ENCODE measurements at regions of chr12 and their contacts with region 1.

Region 1: DNA sequence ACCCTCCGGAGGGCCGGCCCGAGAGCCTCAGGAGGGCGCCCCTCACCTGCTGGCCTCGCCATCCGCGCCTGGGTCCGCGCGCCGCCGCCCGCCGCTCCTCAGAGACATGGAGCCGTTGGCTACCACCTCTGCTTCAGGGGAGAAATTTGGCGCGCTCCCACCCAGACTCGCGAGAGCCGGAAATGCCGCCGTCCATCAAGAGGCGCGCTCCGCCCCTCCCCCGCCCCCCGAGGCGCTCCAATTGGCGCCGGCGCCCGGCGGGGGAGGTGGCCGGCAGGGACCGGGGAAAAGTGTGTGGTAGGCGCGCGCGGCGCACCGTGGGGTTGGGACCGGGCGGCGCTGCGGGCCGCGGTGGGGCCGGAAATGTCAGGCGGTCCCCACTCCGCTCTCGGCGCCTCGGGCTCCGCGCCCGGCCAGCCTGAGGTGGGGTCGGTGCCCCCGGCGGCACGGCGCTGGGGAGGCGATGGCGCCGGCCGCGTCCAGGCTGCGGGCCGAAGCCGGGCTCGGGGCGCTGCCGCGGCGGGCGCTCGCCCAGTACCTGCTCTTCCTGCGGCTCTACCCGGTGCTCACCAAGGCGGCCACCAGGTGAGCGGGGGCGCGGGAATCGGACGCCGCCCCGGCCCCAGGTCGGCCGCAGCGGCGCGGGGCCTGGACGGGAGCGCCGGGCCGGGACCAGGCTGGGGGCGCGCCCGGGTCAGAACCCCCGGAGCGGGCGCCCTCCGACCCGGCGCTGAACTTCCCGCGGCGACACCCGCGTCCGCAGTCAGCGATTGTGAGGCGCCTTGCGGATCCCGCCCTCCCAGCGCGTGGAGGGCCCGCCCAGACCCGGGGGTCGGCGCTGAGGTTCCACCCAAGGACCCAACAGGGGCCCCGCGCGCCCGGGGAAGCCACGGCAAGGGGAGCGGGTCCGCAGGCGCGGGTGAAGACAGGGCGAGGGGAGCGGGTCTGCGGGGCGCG is at the starts of genes POLE and PXMP2:
- DNase-seq: peak; percentile 98
- H3K4me3 Mint-ChIP-seq: peak within 1 kb of the TSS; percentile 85
- H3K27ac Mint-ChIP-seq: peak within 1 kb of the TSS; percentile 88
- H3K4me1 Mint-ChIP-seq: peaks cover 27% of the 10 kb centered on the region
- H3K27me3 Mint-ChIP-seq: no peaks in the 10 kb centered on the region
- total RNA-seq, gene POLE: 171 and 180 TPM in 2 replicates
- total RNA-seq, gene PXMP2: 24.4 and 24.6 TPM in 2 replicates

Region 2: GRCh38 chr12:132710422-132711168 is 23.1 kb after region 1 on chr12 and contains the start of gene PGAM5:
- intact Hi-C with region 1: loop called (anchors 1 kb)
- DNase-seq: peak; percentile 98
- H3K4me3 Mint-ChIP-seq: peak within 1 kb of the TSS; percentile 86
- H3K27ac Mint-ChIP-seq: peak within 1 kb of the TSS; percentile 80
- H3K4me1 Mint-ChIP-seq: peaks cover 18% of the 10 kb centered on the region
- H3K27me3 Mint-ChIP-seq: no peaks in the 10 kb centered on the region
- total RNA-seq, gene PGAM5: 104 and 110 TPM in 2 replicates